ENCODE measurements at regions of chr2 and their contacts with region 1.

Region 1: GRCh38 chr2:219736209-219736608 is 108.8 kb downstream of the SLC4A3 start:
- DNase-seq: peak; percentile 76
- H3K4me3 Mint-ChIP-seq: no peak overlapping the region
- H3K27ac Mint-ChIP-seq: no peak overlapping the region
- H3K4me1 Mint-ChIP-seq: peaks cover 15% of the 10 kb centered on the region
- H3K27me3 Mint-ChIP-seq: no peaks in the 10 kb centered on the region
- CTCF ChIP-seq: peak; percentile 42

Region 2: GRCh38 chr2:219498280-219499057 is 237.7 kb before region 1 on chr2 and contains the start of gene GMPPA:
- CTCF ChIA-PET with region 1: no interaction called
- POLR2A ChIA-PET with region 1: no interaction called
- intact Hi-C with region 1: no loop called
- DNase-seq: peak; percentile 99
- H3K4me3 Mint-ChIP-seq: peak within 1 kb of the TSS; percentile 92
- H3K27ac Mint-ChIP-seq: peak within 1 kb of the TSS; percentile 93
- H3K4me1 Mint-ChIP-seq: peaks cover 24% of the 10 kb centered on the region
- H3K27me3 Mint-ChIP-seq: no peaks in the 10 kb centered on the region
- CTCF ChIP-seq: no peak
- total RNA-seq, gene GMPPA: 70.7 and 80.2 TPM in 2 replicates

Region 3: GRCh38 chr2:219836647-219837177 is 100.5 kb after region 1 on chr2:
- CTCF ChIA-PET with region 1: interaction called, 45 read pairs
- POLR2A ChIA-PET with region 1: interaction called, 3 read pairs
- intact Hi-C with region 1: loop called (anchors 1 kb)
- DNase-seq: peak; percentile 71
- H3K4me3 Mint-ChIP-seq: no peak overlapping the region
- H3K27ac Mint-ChIP-seq: no peak overlapping the region
- H3K4me1 Mint-ChIP-seq: no peaks in the 10 kb centered on the region
- H3K27me3 Mint-ChIP-seq: no peaks in the 10 kb centered on the region
- CTCF ChIP-seq: peak; percentile 54

Region 4: DNA sequence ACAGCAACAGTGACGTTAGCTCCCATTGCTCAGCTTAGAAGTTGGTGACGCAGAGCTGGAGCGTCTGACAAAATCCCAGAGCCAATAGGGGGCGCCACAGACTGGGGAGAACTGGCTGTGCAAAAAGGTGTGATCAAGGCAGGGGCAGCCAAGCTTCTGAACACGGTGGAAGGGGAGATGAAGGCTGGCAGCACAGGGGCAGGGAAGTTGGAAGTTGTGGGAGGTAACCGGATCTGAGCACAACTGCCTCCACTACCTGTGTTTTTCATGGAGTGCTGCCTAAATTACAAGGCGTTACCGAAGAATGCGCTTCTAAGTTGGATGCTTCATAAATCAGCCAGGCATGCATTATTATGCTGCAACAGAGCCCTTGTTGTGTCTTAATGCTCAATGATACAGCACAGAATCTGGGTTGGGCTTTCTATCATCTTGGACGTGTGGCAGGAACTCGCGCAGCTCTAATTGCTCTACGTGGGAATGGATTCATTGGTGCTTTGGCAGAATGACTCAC is 261.2 kb after region 1 on chr2:
- CTCF ChIA-PET with region 1: no interaction called
- POLR2A ChIA-PET with region 1: no interaction called
- intact Hi-C with region 1: loop called (anchors 5 kb)
- DNase-seq: peak; percentile 45
- H3K4me3 Mint-ChIP-seq: no peak overlapping the region
- H3K27ac Mint-ChIP-seq: no peak overlapping the region
- H3K4me1 Mint-ChIP-seq: peaks cover 20% of the 10 kb centered on the region
- H3K27me3 Mint-ChIP-seq: no peaks in the 10 kb centered on the region
- CTCF ChIP-seq: peak; percentile 58

Region 5: GRCh38 chr2:220687231-220687843 is 951.1 kb after region 1 on chr2:
- CTCF ChIA-PET with region 1: interaction called, 4 read pairs
- POLR2A ChIA-PET with region 1: no interaction called
- intact Hi-C with region 1: loop called (anchors 1 kb)
- DNase-seq: peak; percentile 68
- H3K4me3 Mint-ChIP-seq: no peak overlapping the region
- H3K27ac Mint-ChIP-seq: no peak overlapping the region
- H3K4me1 Mint-ChIP-seq: peaks cover 5% of the 10 kb centered on the region
- H3K27me3 Mint-ChIP-seq: no peaks in the 10 kb centered on the region
- CTCF ChIP-seq: peak; percentile 93